Astrocyte of the cerebellum (primary cell): ENCODE measurements at regions of chr6 and their contacts with region 1.

Region 1: DNA sequence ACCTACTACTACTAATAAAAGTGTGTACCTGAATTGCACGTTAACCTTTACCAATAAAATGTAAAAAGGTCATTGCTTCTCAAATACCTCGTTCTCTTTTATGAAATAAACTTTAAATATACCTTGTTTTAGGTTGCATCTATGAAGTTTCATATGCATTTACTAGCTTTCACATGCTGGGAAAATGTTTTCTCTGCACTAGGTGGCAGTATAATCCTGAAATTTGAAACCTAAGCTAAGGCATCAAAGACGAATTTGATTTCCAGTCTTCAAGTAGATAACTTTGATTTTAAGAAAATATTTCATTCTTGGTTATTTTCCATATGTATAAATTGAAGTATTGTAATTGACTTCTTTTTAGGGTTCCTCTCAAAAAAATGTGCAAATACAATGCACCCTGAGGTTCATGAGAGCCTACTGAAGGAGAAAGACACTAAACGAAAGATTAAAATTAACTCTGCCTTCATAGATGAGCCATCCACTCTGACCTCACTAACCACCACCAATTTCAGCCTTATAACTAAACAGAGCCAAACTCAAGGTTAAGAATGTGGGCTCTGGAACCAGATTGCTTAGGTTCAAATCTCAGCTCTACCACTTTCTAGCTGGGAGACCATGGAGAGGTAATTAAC is 7.3 kb upstream of the COL9A1 start:
- DNase-seq: peak; percentile 31
- H3K4me3 ChIP-seq: no peak overlapping the region
- CTCF ChIP-seq: peak; percentile 54

Region 2: DNA sequence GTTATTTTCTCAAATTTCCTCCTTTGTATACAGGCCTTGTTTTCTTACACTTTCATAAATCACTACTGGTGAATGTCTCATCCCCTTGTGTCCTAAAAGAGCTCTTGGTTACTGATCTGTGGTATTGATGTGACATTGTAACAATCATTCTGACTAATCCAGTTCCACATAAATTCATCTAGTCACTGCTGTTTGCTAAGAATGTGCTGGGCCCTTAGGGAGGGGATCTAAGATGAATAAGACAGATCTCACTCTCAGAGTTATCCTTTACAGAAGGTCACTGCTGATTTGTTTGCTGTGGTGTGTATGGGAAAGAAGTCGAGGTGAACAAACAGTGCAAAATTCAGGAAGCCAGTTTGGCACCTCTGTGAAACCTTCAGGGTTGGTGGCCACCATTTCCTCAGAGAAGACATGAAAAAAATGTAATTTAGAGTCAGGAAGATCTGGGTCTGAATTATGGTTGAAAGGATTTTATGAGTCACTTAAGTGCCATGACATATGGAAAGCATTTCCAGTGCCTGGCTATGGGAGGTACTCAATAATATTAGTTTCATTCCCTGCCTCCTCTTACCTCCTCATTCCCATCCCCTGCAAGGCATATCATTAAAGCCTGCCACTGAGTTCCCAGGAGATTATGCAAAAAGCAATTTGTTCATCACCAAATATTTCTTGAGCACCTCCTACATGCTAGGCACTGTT is 129.1 kb before region 1 on chr6:
- in situ Hi-C with region 1: no loop called
- DNase-seq: no peak
- H3K4me3 ChIP-seq: no peak overlapping the region
- CTCF ChIP-seq: no peak

Region 3: DNA sequence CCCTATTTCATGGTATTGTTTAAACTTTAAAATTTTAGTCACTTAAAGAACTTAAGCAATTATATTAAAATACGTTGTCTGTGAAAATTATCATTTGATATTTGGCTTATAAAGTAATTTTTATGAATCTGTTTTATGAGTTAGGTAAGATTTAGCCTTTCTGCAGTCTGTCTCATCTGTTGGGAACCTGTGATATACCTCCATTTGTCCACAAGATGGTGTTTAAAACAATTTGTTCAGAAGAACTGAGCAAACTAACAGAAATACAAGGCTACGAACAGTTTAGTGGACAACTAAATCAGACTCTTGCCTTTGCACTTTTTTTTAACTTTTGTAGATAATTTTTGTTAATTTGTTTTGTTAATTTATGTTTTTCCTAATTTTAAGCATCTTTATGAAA is 99.7 kb before region 1 on chr6:
- in situ Hi-C with region 1: no loop called
- DNase-seq: no peak
- H3K4me3 ChIP-seq: no peak overlapping the region
- CTCF ChIP-seq: peak; percentile 25

Region 4: GRCh38 chr6:70363741-70364493 is 53.7 kb after region 1 on chr6:
- in situ Hi-C with region 1: loop called (anchors 5 kb)
- DNase-seq: no peak
- H3K4me3 ChIP-seq: no peak overlapping the region
- CTCF ChIP-seq: no peak